Lower leg skin (tissue), 4 donors: ENCODE measurements at regions of chr4 and their contacts with region 1.

Region 1: DNA sequence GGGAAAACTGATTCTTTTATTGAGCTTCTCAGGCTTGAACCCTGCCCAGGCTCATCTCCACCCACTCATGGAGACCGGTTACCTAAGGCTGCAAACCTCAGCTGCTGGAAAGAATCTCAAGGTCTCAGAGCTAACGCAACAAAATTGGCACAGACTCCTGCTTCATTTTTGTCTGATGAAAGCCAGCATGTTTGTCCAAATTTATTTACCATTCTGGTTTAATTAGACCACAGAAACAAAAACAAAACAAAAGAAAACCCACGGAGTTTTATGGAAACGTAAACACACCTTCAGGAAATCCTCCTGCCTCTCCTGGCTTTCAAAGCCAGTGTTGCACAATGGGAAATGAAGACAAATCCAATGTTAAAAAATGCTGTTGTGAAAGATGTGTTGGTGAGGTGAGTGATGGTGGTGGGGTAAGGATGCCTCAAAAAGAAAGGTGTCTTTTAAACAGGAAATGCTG is 56.4 kb upstream of the PDLIM3 start:
- DNase-seq: no peak
- H3K4me3 ChIP-seq: no peak overlapping the region
- CTCF ChIP-seq: no peak
- POLR2A ChIP-seq: no peak

Region 2: GRCh38 chr4:184889666-184890335 is 701.9 kb before region 1 on chr4:
- intact Hi-C with region 1: loop called (anchors 5 kb)
- DNase-seq: no peak
- H3K4me3 ChIP-seq: no peak overlapping the region
- CTCF ChIP-seq: no peak
- POLR2A ChIP-seq: no peak

Region 3: GRCh38 chr4:185665655-185666054 is 73.9 kb after region 1 on chr4:
- intact Hi-C with region 1: no loop called
- DNase-seq: no peak
- H3K4me3 ChIP-seq: no peak overlapping the region
- CTCF ChIP-seq: no peak
- POLR2A ChIP-seq: no peak